ENCODE measurements at regions of chr1 and their contacts with region 1.

Region 1: GRCh38 chr1:169694304-169695075 is 16.9 kb downstream of the SELL start:
- DNase-seq: peak; percentile 55
- H3K4me3 Mint-ChIP-seq: peak overlapping the region; percentile 28
- H3K27ac Mint-ChIP-seq: peak overlapping the region; percentile 84
- H3K4me1 Mint-ChIP-seq: peaks cover 94% of the 10 kb centered on the region
- H3K27me3 Mint-ChIP-seq: no peaks in the 10 kb centered on the region

Region 2: DNA sequence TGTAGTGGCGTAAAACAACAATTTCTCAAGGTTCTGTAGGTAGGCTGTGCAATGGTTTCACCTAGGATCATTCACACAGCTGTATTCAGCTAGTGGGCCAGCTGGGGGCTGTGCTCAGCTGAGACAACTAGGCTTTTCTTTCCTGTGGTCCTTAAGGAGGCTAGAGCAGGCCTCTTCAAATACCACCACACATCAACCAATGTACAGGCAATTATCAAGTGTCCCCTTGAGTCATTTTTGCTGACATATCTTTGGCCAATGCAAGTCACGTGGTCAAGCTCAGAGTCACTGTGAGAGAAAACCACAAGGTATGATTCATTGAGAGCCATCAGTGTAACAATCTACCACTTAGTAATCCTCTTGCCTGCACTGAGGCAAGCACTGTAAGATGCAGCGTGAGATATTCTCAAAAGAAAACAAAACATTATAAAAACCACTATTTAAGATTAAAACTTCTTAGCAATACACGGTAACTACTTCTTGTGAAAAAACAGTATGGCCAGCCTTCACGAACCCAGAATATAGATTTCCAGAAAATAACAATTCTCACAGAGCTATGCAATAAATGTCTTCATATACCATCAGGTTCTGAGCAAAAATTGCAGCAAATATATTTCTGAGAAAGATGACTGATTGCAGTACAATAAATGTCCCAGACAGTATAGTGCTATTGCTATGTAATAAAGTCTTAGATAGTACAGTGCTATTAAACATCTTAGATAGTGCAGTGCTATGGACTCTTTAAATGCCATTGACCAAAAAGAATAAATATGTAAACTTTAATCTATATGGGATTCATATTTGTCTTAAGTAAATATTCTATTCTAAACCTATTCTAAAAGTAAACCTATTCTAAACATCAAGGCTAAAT is 382.2 kb before region 1 on chr1:
- intact Hi-C with region 1: loop called (anchors 1 kb)
- DNase-seq: peak; percentile 69
- H3K4me3 Mint-ChIP-seq: no peak overlapping the region
- H3K27ac Mint-ChIP-seq: peak overlapping the region; percentile 70
- H3K4me1 Mint-ChIP-seq: peaks cover 31% of the 10 kb centered on the region
- H3K27me3 Mint-ChIP-seq: no peaks in the 10 kb centered on the region

Region 3: DNA sequence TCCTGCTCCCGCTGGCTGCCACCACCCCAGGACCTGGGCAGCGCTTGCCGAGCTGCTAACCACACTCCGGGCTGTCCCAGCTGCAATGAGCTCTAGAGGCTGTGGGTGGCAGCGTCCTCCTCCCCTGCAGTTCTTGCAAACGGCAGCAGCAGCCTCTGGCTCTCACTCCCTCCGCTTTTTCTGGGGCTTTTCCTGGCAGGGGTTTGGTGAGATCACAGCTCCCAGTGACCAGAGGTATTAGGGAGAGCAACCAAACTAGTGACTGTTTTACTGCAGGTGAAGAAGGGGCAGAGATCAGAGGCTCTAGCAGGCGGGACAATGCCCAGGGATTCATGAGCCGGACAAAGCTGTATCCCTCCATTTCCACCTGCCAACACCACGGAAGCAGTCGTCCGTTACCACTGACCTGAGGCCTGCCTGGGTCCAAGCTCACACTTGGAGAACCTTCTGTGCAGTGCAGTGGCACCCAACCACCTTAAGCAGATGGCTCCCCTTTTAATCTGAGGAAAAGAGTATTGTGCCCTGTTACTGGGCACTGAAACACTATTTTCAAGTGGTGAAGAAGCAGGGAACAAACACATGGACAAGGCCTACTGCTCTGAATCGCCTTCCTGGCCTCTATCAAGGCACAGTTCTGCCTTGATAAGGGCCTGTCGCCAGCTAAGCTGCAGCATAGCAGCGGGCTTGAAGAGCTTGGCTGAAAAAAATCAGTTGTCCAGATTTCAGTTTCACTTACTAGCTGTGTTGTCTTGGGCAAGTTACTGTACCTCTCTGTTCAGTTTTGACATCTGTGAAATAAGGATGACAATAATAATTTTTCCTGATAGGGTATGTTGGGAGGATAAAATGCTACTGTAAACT is 107.9 kb before region 1 on chr1 and contains the start of gene F5:
- intact Hi-C with region 1: loop called (anchors 1 kb)
- DNase-seq: peak; percentile 69
- H3K4me3 Mint-ChIP-seq: peak within 1 kb of the TSS; percentile 89
- H3K27ac Mint-ChIP-seq: peak within 1 kb of the TSS; percentile 83
- H3K4me1 Mint-ChIP-seq: peaks cover 59% of the 10 kb centered on the region
- H3K27me3 Mint-ChIP-seq: no peaks in the 10 kb centered on the region
- total RNA-seq, gene F5: 25.0 and 26.0 TPM in 2 replicates

Region 4: GRCh38 chr1:169670836-169671235 is 23.7 kb before region 1 on chr1:
- intact Hi-C with region 1: loop called (anchors 1 kb)
- DNase-seq: no peak
- H3K4me3 Mint-ChIP-seq: no peak overlapping the region
- H3K27ac Mint-ChIP-seq: no peak overlapping the region
- H3K4me1 Mint-ChIP-seq: peaks cover 33% of the 10 kb centered on the region
- H3K27me3 Mint-ChIP-seq: no peaks in the 10 kb centered on the region

Region 5: GRCh38 chr1:169711469-169712281 is 17.2 kb after region 1 on chr1 and contains the start of gene SELL:
- intact Hi-C with region 1: loop called (anchors 1 kb)
- DNase-seq: peak; percentile 73
- H3K4me3 Mint-ChIP-seq: peak within 1 kb of the TSS; percentile 74
- H3K27ac Mint-ChIP-seq: peak within 1 kb of the TSS; percentile 87
- H3K4me1 Mint-ChIP-seq: peaks cover 31% of the 10 kb centered on the region
- H3K27me3 Mint-ChIP-seq: peaks cover 18% of the 10 kb centered on the region
- total RNA-seq, gene SELL: 63.0 and 64.9 TPM in 2 replicates

Region 6: GRCh38 chr1:169722776-169723175 is 28.3 kb after region 1 on chr1:
- intact Hi-C with region 1: no loop called
- DNase-seq: no peak
- H3K4me3 Mint-ChIP-seq: no peak overlapping the region
- H3K27ac Mint-ChIP-seq: no peak overlapping the region
- H3K4me1 Mint-ChIP-seq: peaks cover 5% of the 10 kb centered on the region
- H3K27me3 Mint-ChIP-seq: peaks cover 18% of the 10 kb centered on the region

Region 7: DNA sequence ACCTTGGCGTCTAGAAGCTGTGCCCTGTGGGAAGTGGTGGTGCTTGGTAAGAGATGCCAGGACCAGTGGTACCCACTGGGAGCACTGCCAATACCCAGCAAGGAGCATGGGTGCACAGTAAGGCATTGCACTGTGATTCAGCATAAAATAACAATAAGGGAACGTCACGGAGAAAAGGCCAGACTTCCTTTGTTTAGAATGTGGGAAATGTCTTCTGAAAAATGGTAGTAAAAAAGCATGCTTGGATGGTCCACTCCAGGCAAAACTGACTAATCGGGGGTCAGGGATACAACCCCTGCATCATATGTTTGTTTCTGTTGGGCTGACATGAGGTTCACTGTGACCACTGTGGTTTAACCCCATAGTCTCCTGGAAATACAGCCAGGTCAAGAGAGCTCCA is 85.5 kb after region 1 on chr1:
- intact Hi-C with region 1: no loop called
- DNase-seq: no peak
- H3K4me3 Mint-ChIP-seq: no peak overlapping the region
- H3K27ac Mint-ChIP-seq: no peak overlapping the region
- H3K4me1 Mint-ChIP-seq: peaks cover 3% of the 10 kb centered on the region
- H3K27me3 Mint-ChIP-seq: peaks cover 13% of the 10 kb centered on the region

Region 8: DNA sequence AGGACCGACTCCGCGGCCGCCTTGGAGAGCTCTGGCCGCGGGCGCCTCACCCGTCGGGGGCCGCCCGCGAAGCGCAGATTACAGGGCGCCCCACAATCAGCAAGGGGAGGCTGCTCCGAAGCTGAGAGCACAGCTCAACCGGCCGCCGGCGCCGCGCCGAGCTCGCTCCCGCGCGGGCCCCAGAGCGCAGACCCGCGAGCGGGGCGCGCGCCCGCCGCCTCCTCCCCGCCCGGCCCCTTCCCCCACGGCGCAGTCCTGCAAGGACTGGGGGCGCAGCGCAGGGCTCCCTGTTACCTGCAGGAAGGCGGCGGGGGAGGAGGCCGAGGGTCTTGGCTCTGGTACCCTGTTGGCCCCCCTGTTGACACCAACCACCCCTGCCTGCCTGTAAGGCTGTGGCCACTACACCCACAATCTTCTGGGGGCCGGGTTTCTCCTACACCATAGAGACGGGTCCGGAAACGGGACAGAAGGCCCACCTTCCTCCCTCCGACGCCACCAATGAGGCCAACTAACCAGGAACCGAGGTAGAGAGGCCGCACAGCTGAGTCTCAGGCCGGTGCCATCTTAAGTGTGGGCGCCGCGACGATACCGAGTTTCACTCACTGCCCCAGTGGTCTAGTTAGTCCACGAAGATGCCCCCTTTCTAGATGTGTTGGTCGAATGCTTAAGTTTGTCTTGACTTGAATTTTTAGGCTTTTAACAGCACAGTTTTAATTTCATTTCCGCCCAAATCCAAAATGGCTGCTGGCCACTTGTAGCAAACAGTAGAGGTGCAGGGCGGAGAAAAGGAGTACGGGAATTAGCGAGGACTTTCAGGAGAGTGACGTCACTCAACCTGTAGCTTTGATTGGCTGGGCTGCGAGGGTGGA is 199.2 kb after region 1 on chr1 and contains the start of gene SCYL3:
- intact Hi-C with region 1: loop called (anchors 5 kb)
- DNase-seq: peak; percentile 89
- H3K4me3 Mint-ChIP-seq: peak within 1 kb of the TSS; percentile 86
- H3K27ac Mint-ChIP-seq: peak within 1 kb of the TSS; percentile 98
- H3K4me1 Mint-ChIP-seq: peaks cover 48% of the 10 kb centered on the region
- H3K27me3 Mint-ChIP-seq: peaks cover 8% of the 10 kb centered on the region
- total RNA-seq, gene SCYL3: 9.5 and 10.2 TPM in 2 replicates

Region 9: DNA sequence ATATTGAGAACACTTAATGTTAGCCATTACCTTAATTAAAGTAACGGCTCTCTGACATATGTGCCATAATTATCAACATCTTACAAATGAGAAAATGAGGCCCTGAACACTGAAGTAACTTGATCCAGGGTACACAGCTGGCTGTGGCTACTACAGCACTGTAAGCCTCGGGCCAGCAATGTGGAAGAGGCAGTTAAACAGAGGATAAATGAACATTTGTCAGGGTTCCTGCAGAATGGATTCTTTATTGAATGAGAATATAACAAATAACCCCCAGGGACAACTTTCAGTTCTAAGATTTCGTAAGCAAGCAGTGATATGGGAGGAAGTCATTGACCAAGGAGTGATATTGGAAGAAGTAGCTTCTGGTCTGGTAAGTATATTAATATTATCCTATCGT is 269.7 kb after region 1 on chr1:
- intact Hi-C with region 1: no loop called
- DNase-seq: no peak
- H3K4me3 Mint-ChIP-seq: no peak overlapping the region
- H3K27ac Mint-ChIP-seq: no peak overlapping the region
- H3K4me1 Mint-ChIP-seq: no peaks in the 10 kb centered on the region
- H3K27me3 Mint-ChIP-seq: no peaks in the 10 kb centered on the region